ENCODE measurements at regions of chr2 and their contacts with region 1.

Region 1: GRCh38 chr2:187453078-187453641 is 5.1 kb upstream of the CALCRL start:
- DNase-seq: no peak
- H3K4me3 ChIP-seq: no peak overlapping the region
- H3K27ac ChIP-seq: no peak overlapping the region
- H3K4me1 ChIP-seq: no peaks in the 10 kb centered on the region
- H3K27me3 ChIP-seq: no peaks in the 10 kb centered on the region
- CTCF ChIP-seq: peak in 3 of 4 experiments; percentile 32 to 45 (median 44)
- POLR2A ChIP-seq: no peak

Region 2: DNA sequence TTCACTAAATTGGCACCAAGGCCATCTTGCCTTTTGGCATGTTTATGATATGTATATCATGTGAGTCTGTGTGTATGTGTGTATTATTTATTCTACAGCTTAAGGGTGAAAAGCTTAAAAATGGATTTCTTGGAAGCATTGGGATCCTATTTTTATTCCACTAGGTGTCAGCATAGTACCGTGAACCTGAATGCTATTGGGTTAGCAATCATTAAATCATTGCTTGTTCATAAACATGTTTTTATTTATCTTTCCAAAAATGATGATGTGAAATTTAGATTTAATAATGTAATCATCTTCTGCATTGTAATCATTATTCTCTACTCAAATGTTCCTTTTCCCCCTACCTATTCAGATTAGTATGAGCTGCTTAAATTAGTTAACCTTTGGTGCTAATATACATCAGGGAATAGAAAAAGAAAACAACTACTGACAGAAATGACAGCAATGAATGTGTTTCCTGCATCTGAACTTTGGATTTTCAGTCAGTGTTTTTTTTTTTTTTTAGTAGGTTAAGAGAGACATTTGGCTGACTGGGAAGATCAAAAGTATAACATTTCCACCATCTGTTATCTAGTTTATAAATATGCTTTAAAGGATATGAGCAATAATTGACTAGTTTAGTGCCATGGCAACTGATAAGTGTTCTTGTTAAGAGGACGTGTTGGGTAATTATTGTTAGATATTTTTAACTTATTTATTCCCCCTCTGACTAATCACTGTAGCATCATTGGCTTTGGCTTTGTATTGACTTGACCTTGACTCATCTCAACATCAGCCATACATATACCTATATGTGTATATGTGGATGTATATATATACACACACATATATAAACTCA is 590.1 kb before region 1 on chr2:
- intact Hi-C with region 1: loop called (anchors 5 kb)
- DNase-seq: no peak
- H3K4me3 ChIP-seq: no peak overlapping the region
- H3K27ac ChIP-seq: no peak overlapping the region
- H3K4me1 ChIP-seq: no peaks in the 10 kb centered on the region
- H3K27me3 ChIP-seq: no peaks in the 10 kb centered on the region
- CTCF ChIP-seq: peak in 3 of 4 experiments; percentile 49 to 64 (median 59)
- POLR2A ChIP-seq: no peak